ENCODE measurements at regions of chr3 and their contacts with region 1.

Region 1: GRCh38 chr3:57078344-57078634 is 17.8 kb downstream of the SPATA12 start:
- DNase-seq: peak; percentile 84
- H3K4me3 ChIP-seq: peak overlapping the region; percentile 98
- H3K27ac ChIP-seq: peak overlapping the region; percentile 48
- H3K4me1 ChIP-seq: peaks cover 60% of the 10 kb centered on the region
- CTCF ChIP-seq: no peak

Region 2: GRCh38 chr3:56682462-56683121 is 395.7 kb before region 1 on chr3:
- CTCF ChIA-PET with region 1: no interaction called
- POLR2A ChIA-PET with region 1: no interaction called
- intact Hi-C with region 1: loop called (anchors 5 kb)
- DNase-seq: peak; percentile 86
- H3K4me3 ChIP-seq: peak overlapping the region; percentile 95
- H3K27ac ChIP-seq: peak overlapping the region; percentile 91
- H3K4me1 ChIP-seq: peaks cover 33% of the 10 kb centered on the region
- CTCF ChIP-seq: 0 out of 2 replicates have a peak, but pooled peaks have one; percentile 8

Region 3: DNA sequence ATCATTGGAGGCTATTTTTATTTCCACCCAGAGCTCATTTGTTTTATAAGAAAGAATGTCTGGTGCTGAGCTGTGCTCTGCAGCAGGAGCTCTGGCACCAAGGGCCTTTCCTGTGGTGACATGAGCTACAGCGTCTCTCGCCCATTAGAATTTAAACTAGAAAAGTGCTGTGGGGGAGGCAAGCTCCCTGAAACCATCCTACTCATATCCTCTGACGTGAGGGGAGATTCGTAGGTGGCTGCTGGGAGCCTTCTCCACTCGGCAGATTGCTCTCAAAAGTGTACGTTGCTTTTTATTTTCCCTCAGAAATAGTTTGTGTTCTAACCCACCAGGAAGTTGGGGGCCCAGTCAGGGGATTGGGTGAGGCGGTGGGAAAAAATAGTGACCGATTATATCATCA is 200.2 kb before region 1 on chr3:
- CTCF ChIA-PET with region 1: no interaction called
- POLR2A ChIA-PET with region 1: no interaction called
- intact Hi-C with region 1: no loop called
- DNase-seq: no peak
- H3K4me3 ChIP-seq: no peak overlapping the region
- H3K27ac ChIP-seq: no peak overlapping the region
- H3K4me1 ChIP-seq: no peaks in the 10 kb centered on the region
- CTCF ChIP-seq: no peak

Region 4: GRCh38 chr3:56997675-56998074 is 80.6 kb before region 1 on chr3:
- CTCF ChIA-PET with region 1: interaction called, 3 read pairs
- POLR2A ChIA-PET with region 1: interaction called, 3 read pairs
- intact Hi-C with region 1: loop called (anchors 2 kb)
- DNase-seq: no peak
- H3K4me3 ChIP-seq: no peak overlapping the region
- H3K27ac ChIP-seq: no peak overlapping the region
- H3K4me1 ChIP-seq: peaks cover 17% of the 10 kb centered on the region
- CTCF ChIP-seq: no peak

Region 5: GRCh38 chr3:57007513-57008460 is 70.5 kb before region 1 on chr3:
- CTCF ChIA-PET with region 1: interaction called, 5 read pairs
- POLR2A ChIA-PET with region 1: interaction called, 4 read pairs
- intact Hi-C with region 1: loop called (anchors 2 kb)
- DNase-seq: no peak
- H3K4me3 ChIP-seq: no peak overlapping the region
- H3K27ac ChIP-seq: no peak overlapping the region
- H3K4me1 ChIP-seq: peaks cover 31% of the 10 kb centered on the region
- CTCF ChIP-seq: no peak